AG04449 (cell line): ENCODE measurements at regions of chr6 and their contacts with region 1.

Region 1: GRCh38 chr6:158220786-158221442 is 52.8 kb downstream of the GTF2H5 start:
- DNase-seq: no peak
- H3K4me3 ChIP-seq: no peak overlapping the region
- CTCF ChIP-seq: peak; percentile 95

Region 2: GRCh38 chr6:157967020-157967419 is 253.9 kb before region 1 on chr6:
- CTCF ChIA-PET with region 1: no interaction called
- POLR2A ChIA-PET with region 1: no interaction called
- DNase-seq: no peak
- H3K4me3 ChIP-seq: no peak overlapping the region
- CTCF ChIP-seq: no peak

Region 3: DNA sequence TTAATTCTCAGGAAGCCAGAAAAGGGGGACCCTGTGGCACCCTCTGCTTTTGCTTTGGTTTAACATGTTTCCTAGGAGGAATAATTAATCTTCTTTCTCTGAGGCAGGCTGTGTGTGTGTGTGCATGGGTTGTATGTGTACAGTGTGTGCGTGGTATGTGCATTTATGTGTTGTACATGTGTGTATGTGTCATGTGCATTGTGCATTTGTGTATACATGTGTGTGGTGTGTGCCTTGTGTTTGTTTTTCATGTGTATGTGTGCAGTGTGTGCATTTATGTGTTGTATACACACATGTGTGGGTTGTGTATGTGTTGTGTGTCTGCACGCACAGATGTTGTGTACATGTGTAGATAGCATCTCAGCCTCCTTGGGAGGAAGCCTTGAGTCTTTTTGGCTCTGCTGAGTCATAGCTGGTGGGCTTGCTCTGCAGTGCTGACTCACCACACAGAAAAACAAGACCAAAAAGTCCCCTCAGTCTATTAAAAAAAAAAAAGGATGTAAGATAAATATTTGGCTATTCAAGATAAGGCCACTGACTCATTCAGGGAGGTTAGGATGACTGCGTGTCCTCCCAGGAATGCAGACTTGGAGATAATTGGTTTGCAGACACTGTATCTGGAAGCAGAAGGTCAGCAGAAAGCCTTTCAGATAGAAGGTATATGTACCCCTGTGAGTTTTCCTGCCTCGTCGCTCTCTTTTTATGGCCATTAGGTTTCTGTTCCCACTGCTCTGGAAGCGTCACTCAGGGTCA is 180.7 kb before region 1 on chr6:
- CTCF ChIA-PET with region 1: no interaction called
- POLR2A ChIA-PET with region 1: no interaction called
- DNase-seq: peak; percentile 95
- H3K4me3 ChIP-seq: peak overlapping the region; percentile 23; the same call in 1 of the 2 replicates
- CTCF ChIP-seq: no peak

Region 4: DNA sequence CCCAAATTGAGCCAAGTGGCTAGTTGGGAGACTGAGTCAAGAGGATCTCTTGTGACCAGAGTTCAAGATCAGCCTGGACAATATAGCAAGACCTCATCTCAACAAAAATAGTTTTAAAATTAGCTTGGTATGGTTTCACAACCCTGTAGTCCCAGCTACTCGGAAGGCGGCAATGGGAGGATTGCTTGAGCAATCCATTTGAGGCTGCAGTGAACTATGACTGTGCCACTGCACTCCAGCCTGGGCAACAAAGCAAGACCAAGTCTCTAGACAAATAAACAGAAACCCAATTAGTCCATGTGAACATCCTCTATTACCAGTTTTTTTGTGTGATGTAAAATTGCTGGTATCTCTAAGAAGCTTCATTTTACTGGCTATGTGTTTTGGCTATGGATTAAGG is 197.6 kb after region 1 on chr6:
- CTCF ChIA-PET with region 1: interaction called, 10 read pairs
- POLR2A ChIA-PET with region 1: no interaction called
- DNase-seq: no peak
- H3K4me3 ChIP-seq: no peak overlapping the region
- CTCF ChIP-seq: no peak

Region 5: DNA sequence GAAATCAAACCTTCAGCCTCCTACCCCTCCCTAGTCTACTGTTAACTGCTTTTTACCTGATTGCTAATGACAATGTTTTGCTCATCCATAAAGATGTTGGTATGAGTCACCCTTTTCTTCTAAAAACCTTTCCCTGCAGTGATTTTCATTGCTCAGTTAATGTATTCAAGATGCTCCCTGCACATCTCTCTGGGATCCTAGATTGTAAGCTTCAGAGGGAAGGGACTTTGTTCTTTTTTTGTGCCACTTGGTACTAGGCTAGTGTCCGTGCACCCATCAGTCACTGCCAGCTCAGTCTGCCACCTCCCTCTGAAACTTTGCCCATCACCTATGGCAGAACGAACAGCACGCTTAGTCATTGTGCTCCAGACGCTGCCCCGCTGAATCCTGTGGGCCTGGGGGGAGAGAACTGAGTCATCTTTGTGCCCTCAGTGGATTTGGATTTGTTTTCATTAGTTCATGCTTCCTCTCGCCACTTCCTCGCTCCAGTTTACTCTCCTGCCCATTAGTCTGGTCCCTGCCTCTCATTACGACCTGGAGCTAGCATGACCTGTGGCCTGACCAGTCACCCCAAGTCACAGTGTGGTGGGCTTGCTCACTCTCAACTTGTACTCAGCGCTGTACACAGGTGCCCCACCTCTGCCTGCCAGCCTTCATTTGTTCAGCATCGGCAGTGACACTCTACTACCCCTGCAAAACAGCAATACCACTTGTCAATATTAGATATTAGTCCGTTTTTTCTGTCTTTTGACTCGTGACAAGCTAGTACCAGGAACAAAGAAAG is 261.0 kb after region 1 on chr6:
- CTCF ChIA-PET with region 1: interaction called, 10 read pairs
- POLR2A ChIA-PET with region 1: no interaction called
- DNase-seq: no peak
- H3K4me3 ChIP-seq: no peak overlapping the region; the same call in 1 of the 2 replicates
- CTCF ChIP-seq: no peak

Region 6: GRCh38 chr6:158595223-158595622 is 374.3 kb after region 1 on chr6:
- CTCF ChIA-PET with region 1: interaction called, 257 read pairs
- POLR2A ChIA-PET with region 1: no interaction called
- DNase-seq: no peak
- H3K4me3 ChIP-seq: no peak overlapping the region
- CTCF ChIP-seq: peak; percentile 13

Region 7: DNA sequence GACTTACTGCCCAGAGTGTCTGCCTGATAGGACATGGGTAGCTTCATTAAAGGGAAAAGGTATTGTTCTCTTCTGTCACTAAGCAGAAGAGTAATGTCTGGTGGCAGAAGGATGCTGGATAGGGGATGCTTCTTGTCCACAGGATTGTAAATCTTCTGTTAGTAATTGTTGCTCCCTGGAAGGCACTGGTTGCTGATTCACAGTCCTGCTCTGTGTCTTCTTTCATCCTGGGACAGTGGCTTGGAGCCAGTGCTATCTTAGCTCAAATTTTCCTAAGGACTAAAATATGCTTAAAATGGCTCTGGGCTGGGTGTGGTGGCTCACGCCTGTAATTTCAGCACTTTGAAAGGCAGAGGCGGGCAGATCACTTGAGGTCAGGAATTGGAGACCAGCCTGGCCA is 476.9 kb after region 1 on chr6:
- CTCF ChIA-PET with region 1: interaction called, 15 read pairs
- POLR2A ChIA-PET with region 1: no interaction called
- DNase-seq: no peak
- H3K4me3 ChIP-seq: no peak overlapping the region
- CTCF ChIP-seq: no peak